ENCODE measurements at regions of chr22 and their contacts with region 1.

Region 1: DNA sequence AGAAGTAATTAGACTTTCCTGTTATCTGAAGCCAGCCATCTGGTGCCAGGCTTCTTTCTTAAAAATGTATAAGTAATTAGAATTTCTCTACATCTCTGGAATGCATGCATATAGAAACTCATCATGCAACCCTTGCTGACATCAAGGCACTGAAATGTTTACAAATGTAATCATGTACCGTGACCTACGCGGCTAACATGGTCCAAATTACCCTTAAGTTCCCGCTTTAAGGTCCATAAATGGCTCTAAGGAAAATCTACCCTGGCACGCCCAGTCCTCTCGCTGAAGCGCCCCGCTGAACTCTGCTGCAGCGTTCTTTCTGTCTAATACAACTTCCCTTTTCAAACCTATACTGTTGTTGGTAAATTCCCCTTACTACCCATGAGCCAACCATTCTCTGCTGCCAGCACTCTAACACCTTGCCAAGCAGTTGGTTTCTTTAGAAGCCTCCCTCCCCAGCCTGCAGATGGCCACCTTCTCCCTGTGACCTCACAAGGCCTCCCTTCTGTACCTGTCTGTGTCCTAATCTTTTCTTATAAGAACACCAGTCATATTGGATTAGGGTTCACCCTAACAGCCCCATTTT is 13.5 kb upstream of the HMOX1 start:
- DNase-seq: no peak
- ATAC-seq: no peak
- H3K4me3 Mint-ChIP-seq: no peak overlapping the region
- H3K27ac Mint-ChIP-seq: no peak overlapping the region; the same call in 1 of the 2 replicates
- H3K4me1 Mint-ChIP-seq: peaks cover 27% of the 10 kb centered on the region
- H3K27me3 Mint-ChIP-seq: peaks cover 4% of the 10 kb centered on the region; the same call in 1 of the 2 replicates
- CTCF ChIP-seq: no peak

Region 2: DNA sequence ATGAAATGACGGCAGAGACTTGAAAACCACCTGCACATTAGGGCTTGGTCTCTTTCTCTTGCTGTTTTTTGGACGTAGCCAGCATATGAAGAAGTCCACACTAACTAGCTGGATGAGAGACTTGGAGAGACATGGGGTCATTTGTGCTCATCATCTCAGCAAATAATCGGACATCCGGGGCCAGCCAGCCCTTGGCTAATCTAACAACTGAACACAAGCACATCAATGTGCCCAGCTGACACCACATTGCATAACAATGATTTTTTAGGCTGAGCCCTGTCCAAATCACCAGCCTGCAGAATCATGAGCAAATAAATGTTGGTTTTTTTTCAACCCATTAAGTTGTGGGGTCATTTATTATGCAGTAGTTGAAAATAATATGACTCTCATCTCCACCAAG is 986.9 kb before region 1 on chr22:
- CTCF ChIA-PET with region 1: no interaction called
- POLR2A ChIA-PET with region 1: interaction called, 10 read pairs
- DNase-seq: no peak
- ATAC-seq: no peak
- H3K4me3 Mint-ChIP-seq: no peak overlapping the region
- H3K27ac Mint-ChIP-seq: no peak overlapping the region
- H3K4me1 Mint-ChIP-seq: no peaks in the 10 kb centered on the region
- H3K27me3 Mint-ChIP-seq: peaks cover 3% of the 10 kb centered on the region; the same call in 1 of the 2 replicates
- CTCF ChIP-seq: no peak

Region 3: GRCh38 chr22:35477911-35478582 is 110.7 kb after region 1 on chr22:
- CTCF ChIA-PET with region 1: no interaction called
- POLR2A ChIA-PET with region 1: no interaction called
- DNase-seq: no peak
- ATAC-seq: no peak
- H3K4me3 Mint-ChIP-seq: no peak overlapping the region
- H3K27ac Mint-ChIP-seq: 0 out of 2 replicates have a peak overlapping the region, but pooled peaks have one; percentile 32
- H3K4me1 Mint-ChIP-seq: peaks cover 9% of the 10 kb centered on the region
- H3K27me3 Mint-ChIP-seq: peaks cover 7% of the 10 kb centered on the region
- CTCF ChIP-seq: no peak